Cardiac septum (tissue), 1 donor: ENCODE measurements at regions of chr7 and their contacts with region 1.

Region 1: DNA sequence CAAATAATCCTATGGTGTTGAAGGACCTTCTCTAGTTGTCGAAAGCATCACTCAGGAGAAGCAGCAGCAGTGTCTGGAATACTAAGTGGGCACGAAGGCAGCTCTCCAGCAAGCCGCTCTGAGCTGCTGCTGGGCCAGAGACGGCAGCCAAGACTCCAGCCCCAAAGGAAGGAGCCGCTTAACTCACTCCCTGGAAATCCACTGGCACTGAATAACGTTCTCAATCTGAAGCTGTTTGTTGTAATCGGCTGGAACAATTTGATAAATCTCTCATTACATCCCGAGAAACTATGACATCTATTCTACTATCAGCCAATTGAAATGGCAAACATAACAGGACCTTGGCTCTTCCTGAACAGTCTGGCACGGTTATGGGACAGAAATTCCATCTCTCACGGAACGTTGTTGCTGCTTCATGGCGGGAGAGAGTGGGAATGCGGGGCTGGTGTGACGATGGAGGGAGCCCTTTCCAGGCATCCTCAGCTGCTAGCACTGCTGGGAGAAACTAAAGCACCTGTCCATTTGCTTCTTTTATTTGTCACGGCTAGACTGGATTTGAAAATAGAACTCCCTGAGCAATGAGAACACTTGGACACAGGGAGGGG is 331.5 kb upstream of the RNF32 start:
- DNase-seq: no peak

Region 2: GRCh38 chr7:156368053-156368851 is 59.1 kb after region 1 on chr7:
- intact Hi-C with region 1: loop called (anchors 10 kb)
- DNase-seq: no peak

Region 3: GRCh38 chr7:156993021-156993924 is 684.2 kb after region 1 on chr7:
- intact Hi-C with region 1: no loop called
- DNase-seq: no peak